GM23248 (cell line): ENCODE measurements at regions of chr2 and their contacts with region 1.

Region 1: GRCh38 chr2:11437602-11438001 is 28.4 kb downstream of the E2F6 start:
- DNase-seq: no peak
- H3K4me3 ChIP-seq: no peak overlapping the region
- H3K27ac ChIP-seq: no peak overlapping the region
- H3K4me1 ChIP-seq: no peaks in the 10 kb centered on the region
- H3K27me3 ChIP-seq: no peaks in the 10 kb centered on the region

Region 2: DNA sequence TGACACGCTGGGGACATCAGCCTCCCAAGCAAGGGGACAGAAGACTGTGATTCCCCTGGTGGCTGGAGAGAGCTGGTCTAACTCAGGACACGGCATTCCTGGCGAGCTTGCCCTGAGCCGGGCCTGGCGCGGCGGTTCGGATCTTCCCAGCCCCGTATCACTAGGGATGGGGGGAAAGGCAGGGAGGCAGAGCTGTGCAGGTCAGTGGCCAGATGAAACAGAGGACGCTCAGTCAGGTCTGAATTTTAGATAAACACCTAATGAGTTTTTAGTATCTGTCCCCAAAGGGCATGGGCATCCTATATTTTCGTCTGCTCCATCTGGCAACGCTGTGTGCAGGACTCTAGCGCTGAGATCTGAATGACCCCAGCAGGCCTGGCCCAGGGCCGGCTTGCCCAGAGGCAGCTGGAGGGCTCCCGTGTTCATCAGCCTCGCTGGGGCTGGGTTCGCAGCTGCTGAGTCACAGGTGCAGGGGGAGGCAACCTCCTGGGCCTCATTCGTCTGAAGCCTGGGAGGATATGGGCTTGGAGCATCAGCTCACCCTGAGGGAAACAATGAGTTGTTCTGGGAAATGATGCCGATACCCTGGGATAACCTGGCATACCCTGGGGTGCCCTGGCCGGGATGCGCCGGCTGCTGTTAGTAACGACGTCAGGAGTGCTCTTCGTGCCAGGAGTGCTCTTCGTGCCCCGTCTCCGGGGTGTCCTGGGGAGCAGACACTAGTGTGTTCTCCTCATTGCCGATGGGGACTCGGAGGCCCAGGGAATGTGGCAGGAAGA is 1183.0 kb before region 1 on chr2:
- in situ Hi-C with region 1: no loop called
- DNase-seq: peak; percentile 21
- H3K4me3 ChIP-seq: no peak overlapping the region
- H3K27ac ChIP-seq: no peak overlapping the region
- H3K4me1 ChIP-seq: no peaks in the 10 kb centered on the region
- H3K27me3 ChIP-seq: no peaks in the 10 kb centered on the region

Region 3: GRCh38 chr2:11234309-11234708 is 203.3 kb before region 1 on chr2:
- in situ Hi-C with region 1: loop called (anchors 10 kb)
- DNase-seq: peak; percentile 46
- H3K4me3 ChIP-seq: no peak overlapping the region
- H3K27ac ChIP-seq: no peak overlapping the region
- H3K4me1 ChIP-seq: no peaks in the 10 kb centered on the region
- H3K27me3 ChIP-seq: no peaks in the 10 kb centered on the region